Body of pancreas (tissue), 4 donors: ENCODE measurements at regions of chr2 and their contacts with region 1.

Region 1: GRCh38 chr2:69902213-69902922 is 8.6 kb downstream of the SNRNP27 start:
- DNase-seq: peak in 1 of 4 donors; percentile 32
- ATAC-seq: no peak
- H3K4me3 ChIP-seq: no peak overlapping the region
- H3K27ac ChIP-seq: peak overlapping the region in 1 of 4 donors; percentile 3
- H3K4me1 ChIP-seq: no peaks in the 10 kb centered on the region
- H3K27me3 ChIP-seq: no peaks in the 10 kb centered on the region
- CTCF ChIP-seq: no peak
- POLR2A ChIP-seq: no peak

Region 2: DNA sequence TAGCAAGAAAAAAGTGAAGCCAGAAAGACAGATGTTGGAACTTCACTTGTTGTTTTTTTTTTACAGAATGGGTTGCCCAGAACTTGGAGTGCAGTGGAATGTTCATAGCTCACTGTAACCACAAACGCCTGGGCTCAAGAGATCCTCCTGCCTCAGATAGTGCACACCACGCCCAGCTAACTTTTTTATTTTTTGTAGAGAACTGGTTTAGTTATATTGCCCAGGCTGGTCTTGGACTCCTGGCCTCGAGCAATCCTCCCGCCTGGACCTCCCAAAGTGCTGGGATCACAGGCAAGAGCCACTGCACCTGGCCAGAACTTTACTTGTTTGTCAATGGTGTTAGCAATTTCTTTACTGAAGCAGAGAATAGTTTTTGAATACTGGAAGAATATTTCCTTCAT is 71.0 kb after region 1 on chr2:
- intact Hi-C with region 1: no loop called
- DNase-seq: no peak
- ATAC-seq: no peak
- H3K4me3 ChIP-seq: no peak overlapping the region
- H3K27ac ChIP-seq: no peak overlapping the region
- H3K4me1 ChIP-seq: no peaks in the 10 kb centered on the region
- H3K27me3 ChIP-seq: no peaks in the 10 kb centered on the region
- CTCF ChIP-seq: no peak
- POLR2A ChIP-seq: no peak

Region 3: GRCh38 chr2:69985688-69986087 is 83.3 kb after region 1 on chr2:
- intact Hi-C with region 1: no loop called
- DNase-seq: peak in 1 of 4 donors; percentile 75
- ATAC-seq: peak; percentile 27
- H3K4me3 ChIP-seq: no peak overlapping the region
- H3K27ac ChIP-seq: peak overlapping the region in 1 of 4 donors; percentile 18
- H3K4me1 ChIP-seq: no peaks in the 10 kb centered on the region
- H3K27me3 ChIP-seq: no peaks in the 10 kb centered on the region
- CTCF ChIP-seq: peak in 1 of 7 experiments; percentile 17
- POLR2A ChIP-seq: no peak

Region 4: GRCh38 chr2:70161069-70161534 is 258.7 kb after region 1 on chr2:
- intact Hi-C with region 1: loop called (anchors 10 kb)
- DNase-seq: peak in 2 of 4 donors; percentile 11 to 13
- ATAC-seq: no peak
- H3K4me3 ChIP-seq: no peak overlapping the region
- H3K27ac ChIP-seq: peak overlapping the region in 1 of 4 donors; percentile 21
- H3K4me1 ChIP-seq: no peaks in the 10 kb centered on the region
- H3K27me3 ChIP-seq: no peaks in the 10 kb centered on the region
- CTCF ChIP-seq: no peak
- POLR2A ChIP-seq: no peak